ENCODE measurements at regions of chr1 and their contacts with region 1.

Region 1: DNA sequence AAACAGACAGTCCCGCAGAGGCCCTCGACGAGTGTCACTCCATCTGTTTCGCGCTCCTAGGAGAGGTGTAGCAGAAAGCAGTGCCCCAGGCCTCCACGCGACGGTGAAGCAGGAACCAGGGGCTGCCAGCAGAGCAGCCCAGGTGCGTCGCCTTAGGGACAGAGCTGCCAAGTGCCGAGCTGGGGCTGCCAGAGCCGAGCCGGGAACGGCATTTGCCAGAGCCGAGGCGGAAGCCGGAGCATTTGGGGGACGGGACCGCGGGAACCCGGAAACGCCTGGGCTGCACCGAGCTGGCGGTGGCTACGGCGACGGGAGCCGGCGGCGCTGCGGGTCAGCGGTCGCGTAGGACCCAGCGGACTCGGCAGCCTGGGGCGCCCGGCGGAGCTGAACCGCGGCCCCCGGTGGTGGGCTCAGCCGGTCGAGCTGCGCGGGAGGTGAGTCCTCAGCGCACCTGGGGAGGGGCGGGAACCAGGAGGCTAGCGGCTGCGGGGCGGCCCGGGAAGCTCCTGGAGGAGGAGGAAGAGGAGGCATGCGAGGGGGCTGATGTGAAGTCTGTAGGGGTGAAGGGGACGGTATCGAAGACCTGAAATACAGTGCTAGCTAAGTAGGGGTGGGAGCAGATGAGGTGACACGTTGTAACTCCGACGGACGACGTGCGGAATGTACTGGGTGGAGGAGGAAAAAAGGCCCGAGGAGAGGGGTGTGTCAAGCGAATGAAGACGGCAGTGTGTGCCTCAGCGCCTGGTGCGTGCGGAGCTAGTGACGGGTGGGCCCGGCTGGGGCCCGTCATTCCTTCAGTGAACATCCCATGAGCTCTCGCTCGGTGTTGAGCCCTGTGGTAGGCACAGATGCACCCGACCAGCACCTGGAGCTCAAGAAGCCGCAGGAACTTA is at the start of gene SLC35A3:
- DNase-seq: peak; percentile 90

Region 2: DNA sequence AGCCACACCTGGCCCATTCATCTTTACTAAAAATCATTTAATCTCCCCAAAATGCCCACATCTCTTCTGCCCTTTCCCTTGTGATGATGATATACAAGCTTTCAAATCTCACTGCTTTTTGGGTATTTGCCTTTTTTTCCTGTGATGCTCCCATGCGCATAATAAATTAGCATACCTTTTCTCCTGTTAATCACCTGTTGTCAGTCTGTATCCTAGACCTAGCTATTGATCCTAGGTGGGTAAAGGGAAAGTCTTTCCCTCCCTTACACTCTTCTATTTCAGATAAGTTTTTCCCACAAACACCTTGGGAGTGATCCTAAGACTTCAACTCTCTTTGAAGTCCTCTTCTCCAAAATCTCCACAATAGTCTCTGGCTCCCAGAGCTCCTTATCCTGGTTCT is 12.2 kb before region 1 on chr1:
- CTCF ChIA-PET with region 1: no interaction called
- POLR2A ChIA-PET with region 1: interaction called, 18 read pairs
- DNase-seq: no peak

Region 3: DNA sequence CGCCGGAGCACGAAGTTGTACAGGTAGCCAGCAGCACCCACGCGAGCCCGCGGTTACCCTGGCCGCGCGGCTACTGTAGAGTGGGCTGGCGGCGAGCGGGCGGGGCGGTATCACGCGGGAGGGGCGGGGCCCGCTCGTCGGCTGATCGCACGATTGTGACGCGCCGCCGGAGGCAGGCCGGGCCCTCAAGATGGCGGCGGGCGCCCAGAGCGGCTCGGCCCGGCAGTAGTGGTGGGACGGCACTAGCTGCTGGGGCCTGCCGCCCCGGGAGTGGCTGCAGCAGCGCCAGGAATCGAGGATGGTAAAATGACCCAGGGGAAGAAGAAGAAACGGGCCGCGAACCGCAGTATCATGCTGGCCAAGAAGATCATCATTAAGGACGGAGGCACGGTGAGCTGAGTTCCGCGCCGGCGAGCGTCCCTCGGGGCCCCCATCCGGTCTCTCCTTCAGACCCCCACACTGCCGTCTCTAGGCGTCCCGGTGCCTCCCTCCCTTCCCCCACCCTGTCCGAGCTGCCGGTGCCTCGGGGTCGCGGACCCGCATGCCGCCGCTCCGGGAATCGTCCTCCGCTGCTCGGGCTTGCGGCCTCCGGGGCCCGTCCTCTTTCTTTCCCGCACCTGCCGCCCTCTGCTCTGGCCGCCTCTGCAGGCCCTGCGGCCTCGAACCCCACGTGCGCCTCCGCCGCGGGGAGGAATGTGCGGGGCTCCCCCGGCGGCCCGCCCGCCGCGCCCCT is 68.1 kb after region 1 on chr1:
- CTCF ChIA-PET with region 1: no interaction called
- POLR2A ChIA-PET with region 1: interaction called, 15 read pairs
- DNase-seq: peak; percentile 94

Region 4: DNA sequence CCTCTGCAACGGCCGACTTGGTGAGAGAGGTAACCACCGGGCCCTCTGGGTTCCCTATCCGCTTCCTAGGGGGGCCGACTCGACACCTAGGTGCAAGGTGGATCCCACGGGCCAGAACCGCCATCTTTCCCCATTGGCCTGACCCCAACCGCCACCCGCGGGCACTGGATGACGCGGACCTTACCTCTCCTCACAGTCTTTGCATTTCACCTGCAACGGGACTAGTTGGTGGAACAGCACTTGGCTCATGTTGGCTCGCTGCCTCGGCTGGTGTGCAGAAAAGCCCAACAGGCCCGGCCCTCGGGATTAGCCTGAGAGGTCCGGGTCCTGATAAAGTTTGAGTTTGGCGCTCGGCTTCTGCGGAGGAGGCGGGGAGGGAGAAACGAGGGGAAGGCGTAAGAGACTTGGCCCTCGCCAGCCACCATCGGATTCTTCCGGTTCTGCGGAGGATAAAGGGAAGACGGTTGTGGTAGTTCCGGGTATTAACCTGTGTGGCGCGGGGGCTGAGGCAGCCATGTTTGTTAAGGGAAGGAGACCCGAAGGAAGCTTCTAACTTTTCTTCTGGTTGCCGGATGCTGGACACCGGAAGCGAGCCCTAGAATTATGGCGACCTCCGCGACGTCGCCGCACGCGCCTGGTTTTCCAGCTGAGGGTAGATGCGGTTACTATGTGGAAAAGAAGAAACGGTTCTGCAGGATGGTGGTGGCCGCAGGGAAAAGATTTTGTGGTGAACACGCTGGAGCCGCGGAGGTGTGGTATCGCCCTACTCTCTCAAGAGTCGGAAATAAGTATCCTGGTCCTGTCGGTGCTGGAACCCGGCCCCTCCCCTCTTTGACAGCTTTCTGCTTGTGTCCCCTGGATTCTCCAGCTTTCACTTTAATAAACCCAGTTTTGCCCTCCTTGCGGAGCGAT is 162.8 kb after region 1 on chr1 and contains the starts of genes SASS6 and TRMT13:
- CTCF ChIA-PET with region 1: no interaction called
- POLR2A ChIA-PET with region 1: interaction called, 10 read pairs
- DNase-seq: peak; percentile 93